Sigmoid colon (tissue), 7 donors: ENCODE measurements at regions of chr3 and their contacts with region 1.

Region 1: GRCh38 chr3:134600685-134601463 is 49.9 kb downstream of the KY start:
- DNase-seq: no peak
- H3K4me3 ChIP-seq: no peak overlapping the region
- H3K27ac ChIP-seq: no peak overlapping the region
- H3K4me1 ChIP-seq: peaks cover 0 to 11% (median 8%) of the 10 kb centered on the region in 4 donors
- H3K27me3 ChIP-seq: no peaks in the 10 kb centered on the region
- CTCF ChIP-seq: peak; percentile 46 to 95 (median 80)
- EP300 ChIP-seq: no peak
- POLR2A ChIP-seq: no peak

Region 2: GRCh38 chr3:134333522-134334181 is 267.2 kb before region 1 on chr3:
- intact Hi-C with region 1: no loop called
- DNase-seq: peak; percentile 70
- H3K4me3 ChIP-seq: no peak overlapping the region
- H3K27ac ChIP-seq: peak overlapping the region; percentile 74 to 88 (median 81)
- H3K4me1 ChIP-seq: peaks cover 0 to 80% (median 69%) of the 10 kb centered on the region in 4 donors
- H3K27me3 ChIP-seq: no peaks in the 10 kb centered on the region
- CTCF ChIP-seq: peak in 2 of 4 experiments; percentile 8 to 29
- EP300 ChIP-seq: peak in 1 of 4 donors; percentile 23
- POLR2A ChIP-seq: no peak

Region 3: GRCh38 chr3:134618478-134619300 is 17.8 kb after region 1 on chr3:
- intact Hi-C with region 1: no loop called
- DNase-seq: no peak
- H3K4me3 ChIP-seq: no peak overlapping the region
- H3K27ac ChIP-seq: no peak overlapping the region
- H3K4me1 ChIP-seq: no peaks in the 10 kb centered on the region
- H3K27me3 ChIP-seq: no peaks in the 10 kb centered on the region
- CTCF ChIP-seq: no peak
- EP300 ChIP-seq: no peak
- POLR2A ChIP-seq: no peak

Region 4: DNA sequence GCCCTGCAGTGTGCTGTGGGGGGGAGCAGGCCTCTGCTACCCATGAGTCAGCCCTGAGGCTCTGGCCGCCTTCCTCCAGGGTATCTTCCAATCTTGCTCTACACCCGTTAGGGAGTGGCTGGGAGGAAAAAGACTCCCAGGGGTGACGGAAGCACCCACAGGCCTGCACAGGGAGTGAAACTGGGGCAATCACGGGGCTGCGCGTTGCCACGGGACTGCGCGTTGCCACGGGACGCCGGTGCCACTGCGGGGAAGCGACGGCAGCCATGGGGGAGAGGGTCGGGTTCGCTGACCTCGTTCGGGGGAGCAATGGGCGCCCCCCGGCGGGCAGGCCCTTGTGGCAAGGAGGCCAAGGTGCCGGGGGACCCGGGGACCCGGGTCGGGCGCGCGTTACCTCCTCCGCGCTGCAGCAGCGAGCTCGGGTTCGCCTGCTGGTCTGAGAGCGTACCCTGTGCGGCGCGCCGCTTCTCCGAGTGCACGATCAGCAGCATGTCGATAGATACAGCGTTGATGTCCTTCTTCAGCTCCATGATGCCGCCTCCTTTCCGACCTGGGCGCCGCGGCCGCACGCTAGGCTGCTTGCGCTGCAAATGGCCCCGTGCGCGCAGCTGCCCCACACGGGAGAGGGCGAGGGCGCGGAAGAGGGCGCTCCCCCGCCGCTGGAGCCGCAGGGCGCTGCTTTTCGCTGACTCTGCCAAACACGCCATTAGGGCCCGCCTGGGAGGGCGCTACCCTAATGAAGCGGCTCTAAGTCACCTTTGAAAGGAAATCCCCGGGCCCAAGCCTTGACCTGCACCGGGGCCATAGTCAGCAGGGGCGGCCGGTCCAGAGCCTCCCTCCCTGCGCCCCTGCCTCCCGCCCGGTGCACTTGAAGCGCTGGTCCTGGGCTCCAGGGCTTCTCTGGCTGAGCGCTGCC is 49.8 kb after region 1 on chr3 and contains the start of gene KY:
- intact Hi-C with region 1: loop called (anchors 5 kb)
- DNase-seq: no peak
- H3K4me3 ChIP-seq: peak within 1 kb of the TSS; percentile 28 to 62 (median 57)
- H3K27ac ChIP-seq: peak within 1 kb of the TSS; percentile 79 to 84 (median 80)
- H3K4me1 ChIP-seq: peaks cover 0 to 31% (median 25%) of the 10 kb centered on the region in 4 donors
- H3K27me3 ChIP-seq: no peaks in the 10 kb centered on the region
- CTCF ChIP-seq: no peak
- EP300 ChIP-seq: no peak
- POLR2A ChIP-seq: no peak
- total RNA-seq, gene KY: 1.3 to 3.9 (median 3.1) TPM

Region 5: DNA sequence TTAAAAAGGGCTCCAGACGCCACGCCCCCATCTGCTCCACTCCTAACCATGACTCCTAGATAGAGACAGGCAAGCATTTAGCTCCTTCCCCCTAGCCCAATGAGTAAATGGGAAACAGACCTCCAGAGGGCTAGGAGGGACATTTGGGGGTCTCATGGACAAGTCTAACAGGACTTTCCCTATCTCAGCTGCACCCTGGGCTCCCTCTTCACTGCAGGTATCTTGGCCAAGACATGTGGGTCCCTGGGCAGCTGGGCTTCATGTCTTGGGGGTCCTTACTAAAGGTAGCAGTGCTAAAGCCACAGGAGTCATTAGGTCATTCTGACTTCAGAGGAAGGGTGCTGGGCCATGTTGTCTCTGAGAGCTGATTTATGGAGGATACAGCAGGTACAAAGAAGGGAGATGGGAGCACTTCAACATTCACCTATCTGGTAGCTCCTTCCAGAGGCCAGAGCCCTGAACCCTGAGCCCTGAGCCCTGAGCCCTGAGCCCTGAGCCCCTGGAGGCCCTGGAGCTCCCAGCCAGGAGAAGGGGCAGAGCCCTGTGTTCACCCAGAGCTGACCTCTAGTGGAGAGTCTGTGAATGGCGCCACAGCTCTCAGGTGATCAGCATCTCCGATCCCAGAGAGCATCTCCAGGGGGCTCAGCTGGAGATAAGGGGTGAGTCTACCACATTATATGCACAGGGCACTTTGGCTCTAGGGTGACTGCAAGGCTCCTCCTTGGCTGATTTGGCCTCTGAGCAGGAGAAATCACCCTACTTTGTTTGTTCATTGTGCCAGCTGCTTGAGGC is 154.1 kb after region 1 on chr3:
- intact Hi-C with region 1: loop called (anchors 5 kb)
- DNase-seq: no peak
- H3K4me3 ChIP-seq: no peak overlapping the region
- H3K27ac ChIP-seq: no peak overlapping the region
- H3K4me1 ChIP-seq: no peaks in the 10 kb centered on the region
- H3K27me3 ChIP-seq: no peaks in the 10 kb centered on the region
- CTCF ChIP-seq: peak; percentile 12 to 66 (median 56)
- EP300 ChIP-seq: no peak
- POLR2A ChIP-seq: no peak

Region 6: GRCh38 chr3:135503760-135504686 is 903.1 kb after region 1 on chr3:
- intact Hi-C with region 1: loop called (anchors 5 kb)
- DNase-seq: peak; percentile 73
- H3K4me3 ChIP-seq: no peak overlapping the region
- H3K27ac ChIP-seq: no peak overlapping the region
- H3K4me1 ChIP-seq: peaks cover 0 to 5% (median 0%) of the 10 kb centered on the region in 4 donors
- H3K27me3 ChIP-seq: no peaks in the 10 kb centered on the region
- CTCF ChIP-seq: peak in 3 of 4 experiments; percentile 26 to 51 (median 51)
- EP300 ChIP-seq: no peak
- POLR2A ChIP-seq: no peak

Region 7: GRCh38 chr3:135895106-135895733 is 1294.3 kb after region 1 on chr3:
- intact Hi-C with region 1: loop called (anchors 1 kb)
- DNase-seq: peak; percentile 63
- H3K4me3 ChIP-seq: no peak overlapping the region
- H3K27ac ChIP-seq: no peak overlapping the region
- H3K4me1 ChIP-seq: no peaks in the 10 kb centered on the region
- H3K27me3 ChIP-seq: no peaks in the 10 kb centered on the region
- CTCF ChIP-seq: peak; percentile 32 to 78 (median 53)
- EP300 ChIP-seq: no peak
- POLR2A ChIP-seq: no peak